ENCODE measurements at regions of chr1 and their contacts with region 1.

Region 1: GRCh38 chr1:236181059-236181458 is 38.7 kb downstream of the GPR137B start:
- DNase-seq: peak; percentile 58
- ATAC-seq: peak; percentile 74
- H3K4me3 ChIP-seq: no peak overlapping the region
- H3K27ac ChIP-seq: no peak overlapping the region
- H3K4me1 ChIP-seq: peaks cover 14% of the 10 kb centered on the region
- H3K27me3 ChIP-seq: no peaks in the 10 kb centered on the region
- CTCF ChIP-seq: no peak

Region 2: DNA sequence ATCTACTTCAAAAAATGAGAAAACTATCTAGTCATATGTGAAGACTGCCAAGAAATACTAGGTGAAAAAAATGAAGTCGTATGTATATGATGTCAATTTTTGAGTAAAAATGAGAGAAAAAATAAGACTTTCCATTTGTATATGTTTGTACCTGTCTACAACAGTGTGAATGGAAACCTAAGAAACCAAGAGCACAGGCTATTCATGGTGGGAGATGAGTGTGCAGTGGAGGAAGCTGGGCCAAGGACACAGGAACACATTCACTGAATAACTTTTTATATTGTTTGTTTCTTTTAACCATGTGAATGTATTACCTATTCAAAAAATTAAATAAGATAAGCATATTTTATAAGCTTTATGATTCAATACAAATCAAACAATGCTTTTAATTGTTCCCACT is 33.7 kb after region 1 on chr1:
- CTCF ChIA-PET with region 1: no interaction called
- POLR2A ChIA-PET with region 1: no interaction called
- intact Hi-C with region 1: loop called (anchors 2 kb)
- DNase-seq: no peak
- ATAC-seq: peak; percentile 75
- H3K4me3 ChIP-seq: no peak overlapping the region
- H3K27ac ChIP-seq: no peak overlapping the region
- H3K4me1 ChIP-seq: no peaks in the 10 kb centered on the region
- H3K27me3 ChIP-seq: no peaks in the 10 kb centered on the region
- CTCF ChIP-seq: no peak